WTC11 (cell line): ENCODE measurements at regions of chr18 and their contacts with region 1.

Region 1: GRCh38 chr18:76822510-76823160 is at the start of gene ZNF236:
- DNase-seq: peak; percentile 62
- ATAC-seq: peak; percentile 39
- H3K4me3 Mint-ChIP-seq: peak within 1 kb of the TSS; percentile 87
- H3K27ac Mint-ChIP-seq: peak within 1 kb of the TSS; percentile 85
- H3K4me1 Mint-ChIP-seq: peaks cover 32% of the 10 kb centered on the region
- H3K27me3 Mint-ChIP-seq: no peaks in the 10 kb centered on the region; the same call in 1 of the 2 replicates
- CTCF ChIP-seq: no peak
- total RNA-seq, gene ZNF236: 19.9 to 23.4 TPM (median 20.6 TPM) in 3 replicates

Region 2: GRCh38 chr18:76398896-76399612 is 423.6 kb before region 1 on chr18:
- CTCF ChIA-PET with region 1: no interaction called
- POLR2A ChIA-PET with region 1: no interaction called
- DNase-seq: peak; percentile 84
- ATAC-seq: peak; percentile 85
- H3K4me3 Mint-ChIP-seq: no peak overlapping the region
- H3K27ac Mint-ChIP-seq: 0 out of 2 replicates have a peak overlapping the region, but pooled peaks have one; percentile 23
- H3K4me1 Mint-ChIP-seq: peaks cover 27% of the 10 kb centered on the region
- H3K27me3 Mint-ChIP-seq: no peaks in the 10 kb centered on the region
- CTCF ChIP-seq: peak; percentile 84

Region 3: GRCh38 chr18:76803814-76804213 is 18.8 kb before region 1 on chr18:
- CTCF ChIA-PET with region 1: interaction called, 19 read pairs
- POLR2A ChIA-PET with region 1: interaction called, 3 read pairs
- DNase-seq: peak; percentile 79
- ATAC-seq: peak; percentile 76
- H3K4me3 Mint-ChIP-seq: no peak overlapping the region
- H3K27ac Mint-ChIP-seq: no peak overlapping the region
- H3K4me1 Mint-ChIP-seq: peaks cover 11% of the 10 kb centered on the region
- H3K27me3 Mint-ChIP-seq: no peaks in the 10 kb centered on the region; the same call in 1 of the 2 replicates
- CTCF ChIP-seq: peak; percentile 63